ENCODE measurements at regions of chr15 and their contacts with region 1.

Region 1: GRCh38 chr15:85667491-85668424 is 127.0 kb downstream of the KLHL25 start:
- DNase-seq: peak in 32 of 35 experiments; percentile 22 to 93 (median 63)
- ATAC-seq: peak; percentile 81 to 94 (median 92)
- H3K4me3 ChIP-seq: no peak overlapping the region
- H3K4me3 Mint-ChIP-seq: peak overlapping the region; percentile 10 to 46 (median 29)
- H3K27ac ChIP-seq: peak overlapping the region; percentile 98
- H3K27ac Mint-ChIP-seq: peak overlapping the region; percentile 94 to 96
- H3K4me1 ChIP-seq: peaks cover 11 to 12% of the 10 kb centered on the region in 2 experiments
- H3K4me1 Mint-ChIP-seq: peaks cover 26 to 34% (median 26%) of the 10 kb centered on the region in 3 donors
- H3K27me3 ChIP-seq: no peaks in the 10 kb centered on the region
- H3K27me3 Mint-ChIP-seq: no peaks in the 10 kb centered on the region

Region 2: DNA sequence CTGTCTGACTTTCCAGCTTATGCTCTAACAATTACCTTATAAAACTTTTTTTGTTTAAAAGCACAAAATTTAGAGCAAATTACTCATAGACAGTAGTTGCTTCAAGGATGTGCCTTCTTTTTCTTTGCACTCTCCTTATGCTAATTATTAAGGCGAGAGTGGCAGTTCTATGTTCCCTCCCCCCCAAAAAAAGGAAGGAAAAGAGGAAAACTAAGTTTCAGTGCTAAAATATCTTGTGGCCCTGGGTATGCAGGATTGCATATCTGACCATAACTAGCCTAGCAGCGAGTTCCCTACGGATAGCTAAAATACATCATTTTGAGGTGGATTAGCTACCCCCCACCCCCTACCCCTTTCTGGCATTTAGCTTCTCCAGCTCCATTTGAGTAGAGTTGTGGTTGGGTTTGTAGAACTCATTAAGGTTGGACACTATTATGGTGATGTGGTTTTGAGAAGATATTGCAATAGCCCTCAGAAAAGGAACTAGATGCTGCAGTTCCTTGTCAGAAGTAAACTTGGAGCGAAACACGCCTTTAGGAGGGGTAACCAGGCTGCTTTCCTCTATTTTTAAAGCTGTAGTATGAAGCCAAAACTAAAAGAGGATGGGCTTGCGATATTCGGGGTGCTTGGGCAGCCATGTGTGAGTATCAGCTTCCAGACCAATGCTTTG is 112.8 kb before region 1 on chr15:
- CTCF ChIA-PET with region 1: no interaction called
- POLR2A ChIA-PET with region 1: no interaction called
- DNase-seq: no peak
- ATAC-seq: no peak
- H3K4me3 ChIP-seq: no peak overlapping the region
- H3K4me3 Mint-ChIP-seq: no peak overlapping the region
- H3K27ac ChIP-seq: no peak overlapping the region
- H3K27ac Mint-ChIP-seq: peak overlapping the region; percentile 24 to 33
- H3K4me1 ChIP-seq: peaks cover 6 to 7% of the 10 kb centered on the region in 2 experiments
- H3K4me1 Mint-ChIP-seq: peaks cover 44 to 55% (median 51%) of the 10 kb centered on the region in 3 donors
- H3K27me3 ChIP-seq: no peaks in the 10 kb centered on the region
- H3K27me3 Mint-ChIP-seq: no peaks in the 10 kb centered on the region

Region 3: DNA sequence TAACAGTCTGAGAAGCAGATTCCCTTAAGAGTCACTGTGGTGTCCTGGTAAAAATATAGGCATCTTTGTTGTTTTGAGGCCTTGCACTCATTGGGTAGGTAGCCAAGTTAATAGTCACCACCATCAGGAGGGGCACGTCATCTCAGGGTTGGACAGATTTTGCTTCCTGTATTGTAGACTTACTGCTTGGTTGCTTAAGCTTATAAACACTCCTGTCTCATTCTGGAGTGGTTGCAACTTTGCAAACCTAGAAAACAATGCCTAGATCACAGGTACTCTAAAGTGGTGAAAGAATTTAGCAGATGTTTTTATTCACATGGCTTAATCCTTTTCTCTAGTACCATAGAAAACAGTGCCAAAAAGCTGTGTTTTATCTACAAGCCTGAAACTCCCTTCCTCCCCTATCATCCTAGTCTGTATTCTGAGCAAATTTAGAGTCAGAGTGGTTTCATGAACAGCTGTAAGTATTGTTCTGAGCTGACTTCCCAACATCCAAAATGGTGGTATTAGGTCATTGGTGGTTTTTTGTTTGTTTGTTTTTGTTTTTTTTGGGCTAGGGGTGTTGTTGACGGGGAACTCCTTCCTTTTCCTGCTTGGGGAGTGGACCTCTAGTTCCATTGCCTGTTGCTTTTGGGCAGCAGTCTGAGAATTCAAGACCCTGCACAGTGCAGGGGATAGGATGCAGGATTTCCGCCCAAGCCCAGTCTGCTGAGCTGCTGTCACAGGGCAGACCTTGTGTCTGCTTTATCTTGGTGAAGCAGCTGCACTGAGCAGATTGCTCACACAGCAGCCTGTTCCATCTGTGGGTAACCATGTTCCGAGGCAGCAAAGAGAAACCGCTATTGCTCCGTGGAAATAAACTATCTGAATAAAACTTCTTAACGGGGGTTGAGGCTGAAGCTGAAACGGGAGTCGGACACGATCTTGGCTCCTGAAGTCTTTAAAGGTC is 85.4 kb before region 1 on chr15:
- CTCF ChIA-PET with region 1: interaction called in 1 of 2 experiments, 3 read pairs
- POLR2A ChIA-PET with region 1: interaction called in 1 of 2 experiments, 23 read pairs
- DNase-seq: peak; percentile 32 to 79 (median 64)
- ATAC-seq: peak; percentile 87 to 92 (median 90)
- H3K4me3 ChIP-seq: peak overlapping the region; percentile 55 to 58
- H3K4me3 Mint-ChIP-seq: peak overlapping the region; percentile 82 to 88 (median 82)
- H3K27ac ChIP-seq: peak overlapping the region; percentile 93
- H3K27ac Mint-ChIP-seq: peak overlapping the region; percentile 96 to 99
- H3K4me1 ChIP-seq: peaks cover 39 to 45% of the 10 kb centered on the region in 2 experiments
- H3K4me1 Mint-ChIP-seq: peaks cover 76 to 82% (median 77%) of the 10 kb centered on the region in 3 donors
- H3K27me3 ChIP-seq: no peaks in the 10 kb centered on the region
- H3K27me3 Mint-ChIP-seq: no peaks in the 10 kb centered on the region

Region 4: DNA sequence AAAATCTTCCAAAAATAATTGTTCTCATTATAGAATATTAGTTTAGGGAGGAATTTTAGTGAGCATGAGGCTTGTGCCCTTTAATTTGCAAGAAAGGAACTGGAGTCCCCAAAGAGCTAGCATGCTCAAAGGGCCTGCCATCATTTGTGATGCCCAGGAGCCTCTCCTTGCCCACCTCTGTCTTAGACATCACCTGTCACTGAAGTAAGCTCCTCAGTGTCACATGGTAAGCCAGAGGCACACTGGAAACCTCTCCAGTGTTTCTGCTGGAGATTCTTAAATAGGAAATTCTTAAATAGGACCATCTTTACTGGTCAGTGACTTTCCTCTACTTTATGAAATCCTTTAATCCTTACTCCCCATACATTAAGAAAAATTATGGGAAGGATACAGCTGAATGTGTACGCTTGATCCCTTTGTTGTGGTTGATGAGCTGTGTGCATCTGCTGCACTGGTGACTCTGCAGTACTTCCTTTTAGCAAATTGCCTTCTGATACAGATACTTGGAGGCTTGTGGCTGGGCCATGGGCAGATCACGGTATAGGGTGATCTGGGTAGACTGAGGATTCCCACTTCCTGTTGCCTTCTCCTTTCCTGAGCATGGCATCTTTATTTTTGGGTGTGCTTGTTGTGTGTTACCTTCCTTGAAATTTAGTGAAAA is 70.5 kb before region 1 on chr15:
- CTCF ChIA-PET with region 1: no interaction called
- POLR2A ChIA-PET with region 1: no interaction called
- DNase-seq: peak in 6 of 35 experiments; percentile 16 to 59 (median 20)
- ATAC-seq: peak; percentile 89 to 98 (median 92)
- H3K4me3 ChIP-seq: no peak overlapping the region
- H3K4me3 Mint-ChIP-seq: peak overlapping the region in 2 of 3 donors; percentile 21 to 50
- H3K27ac ChIP-seq: peak overlapping the region; percentile 26
- H3K27ac Mint-ChIP-seq: peak overlapping the region; percentile 81 to 92
- H3K4me1 ChIP-seq: peaks cover 10 to 13% of the 10 kb centered on the region in 2 experiments
- H3K4me1 Mint-ChIP-seq: peaks cover 47 to 56% (median 55%) of the 10 kb centered on the region in 3 donors
- H3K27me3 ChIP-seq: no peaks in the 10 kb centered on the region
- H3K27me3 Mint-ChIP-seq: no peaks in the 10 kb centered on the region

Region 5: GRCh38 chr15:85646538-85647091 is 21.1 kb before region 1 on chr15:
- CTCF ChIA-PET with region 1: interaction called in 1 of 2 experiments, 3 read pairs
- POLR2A ChIA-PET with region 1: interaction called, 5 to 13 read pairs
- DNase-seq: peak in 21 of 35 experiments; percentile 3 to 78 (median 24)
- ATAC-seq: peak; percentile 63 to 80 (median 70)
- H3K4me3 ChIP-seq: no peak overlapping the region
- H3K4me3 Mint-ChIP-seq: peak overlapping the region in 1 of 3 donors; percentile 12
- H3K27ac ChIP-seq: peak overlapping the region; percentile 90
- H3K27ac Mint-ChIP-seq: peak overlapping the region; percentile 86 to 89
- H3K4me1 ChIP-seq: peaks cover 11 to 36% of the 10 kb centered on the region in 2 experiments
- H3K4me1 Mint-ChIP-seq: peaks cover 38 to 55% (median 52%) of the 10 kb centered on the region in 3 donors
- H3K27me3 ChIP-seq: no peaks in the 10 kb centered on the region
- H3K27me3 Mint-ChIP-seq: no peaks in the 10 kb centered on the region

Region 6: DNA sequence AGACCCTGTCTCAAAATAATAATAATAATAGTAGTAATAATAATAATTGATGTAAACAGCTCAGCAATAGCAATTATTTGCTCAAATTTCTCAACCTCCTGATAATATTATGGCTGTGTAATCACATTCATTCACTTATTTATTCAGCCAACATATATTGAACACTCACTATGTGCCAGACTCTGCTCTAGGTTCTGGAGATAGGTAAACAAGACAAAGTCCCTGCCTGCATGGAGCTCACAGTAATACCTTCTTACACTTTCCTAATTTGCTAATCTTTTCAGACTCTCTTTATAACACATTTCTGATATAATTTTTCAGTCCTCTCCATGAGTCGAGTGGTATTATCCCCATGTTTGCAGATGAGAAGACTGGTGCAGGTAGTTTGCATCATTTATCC is 10.6 kb before region 1 on chr15:
- CTCF ChIA-PET with region 1: interaction called in 1 of 2 experiments, 5 read pairs
- POLR2A ChIA-PET with region 1: interaction called, 9 to 14 read pairs
- DNase-seq: no peak
- ATAC-seq: no peak
- H3K4me3 ChIP-seq: no peak overlapping the region
- H3K4me3 Mint-ChIP-seq: no peak overlapping the region
- H3K27ac ChIP-seq: no peak overlapping the region
- H3K27ac Mint-ChIP-seq: no peak overlapping the region
- H3K4me1 ChIP-seq: no peaks in the 10 kb centered on the region
- H3K4me1 Mint-ChIP-seq: peaks cover 0 to 8% (median 2%) of the 10 kb centered on the region in 3 donors
- H3K27me3 ChIP-seq: no peaks in the 10 kb centered on the region
- H3K27me3 Mint-ChIP-seq: no peaks in the 10 kb centered on the region

Region 7: GRCh38 chr15:85689729-85690128 is 22.0 kb after region 1 on chr15:
- CTCF ChIA-PET with region 1: interaction called in 1 of 2 experiments, 9 read pairs
- POLR2A ChIA-PET with region 1: interaction called, 3 to 35 read pairs
- DNase-seq: peak; percentile 53 to 83 (median 70)
- ATAC-seq: peak; percentile 79 to 90 (median 84)
- H3K4me3 ChIP-seq: peak overlapping the region; percentile 65 to 94
- H3K4me3 Mint-ChIP-seq: peak overlapping the region; percentile 96 to 98 (median 98)
- H3K27ac ChIP-seq: peak overlapping the region; percentile 93
- H3K27ac Mint-ChIP-seq: peak overlapping the region; percentile 98 to 99
- H3K4me1 ChIP-seq: peaks cover 33 to 51% of the 10 kb centered on the region in 2 experiments
- H3K4me1 Mint-ChIP-seq: peaks cover 70 to 77% (median 76%) of the 10 kb centered on the region in 3 donors
- H3K27me3 ChIP-seq: no peaks in the 10 kb centered on the region
- H3K27me3 Mint-ChIP-seq: no peaks in the 10 kb centered on the region

Region 8: DNA sequence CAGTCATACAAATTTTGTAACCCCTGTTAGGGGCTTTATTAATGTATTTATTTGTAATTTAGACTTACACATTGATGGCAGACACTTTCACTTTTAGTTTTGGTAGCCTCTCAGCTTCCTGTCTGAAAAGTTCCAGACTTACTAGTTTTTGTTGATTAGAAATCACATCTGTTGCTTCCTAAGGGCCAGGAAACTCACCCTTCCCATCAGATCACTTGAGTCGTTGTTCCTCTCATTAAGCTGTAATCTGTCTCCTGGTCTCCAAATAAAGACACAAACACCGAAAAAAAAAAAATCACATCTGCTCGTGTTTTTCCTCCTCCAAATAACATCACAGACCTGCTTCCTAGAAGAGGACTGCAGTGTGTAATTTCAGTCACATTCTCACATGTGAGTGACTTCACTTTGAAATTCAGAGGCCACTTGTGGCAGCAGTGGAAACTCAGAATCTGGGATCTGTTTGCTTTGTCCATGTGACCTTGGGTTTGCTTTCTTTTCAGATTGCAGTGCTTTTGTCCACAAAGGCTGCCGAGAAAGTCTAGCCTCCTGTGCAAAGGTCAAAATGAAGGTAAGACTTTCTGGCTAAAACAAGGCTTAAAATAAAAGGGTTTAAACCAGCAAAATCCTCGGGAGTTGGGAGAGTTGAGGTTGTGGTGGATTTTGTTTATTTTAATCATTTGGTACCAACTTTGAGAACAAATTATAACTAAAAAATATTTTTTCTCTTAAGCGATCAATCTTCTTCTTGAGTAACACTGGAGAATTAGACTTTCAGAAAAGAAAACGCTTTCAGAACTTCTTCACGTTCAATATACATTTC is 40.0 kb after region 1 on chr15:
- CTCF ChIA-PET with region 1: interaction called in 1 of 2 experiments, 6 read pairs
- POLR2A ChIA-PET with region 1: interaction called in 1 of 2 experiments, 11 read pairs
- DNase-seq: peak in 1 of 35 experiments; percentile 73
- ATAC-seq: peak; percentile 38 to 65 (median 42)
- H3K4me3 ChIP-seq: peak overlapping the region; percentile 34 to 46
- H3K4me3 Mint-ChIP-seq: peak overlapping the region; percentile 73 to 84 (median 82)
- H3K27ac ChIP-seq: peak overlapping the region; percentile 91
- H3K27ac Mint-ChIP-seq: peak overlapping the region; percentile 95 to 98
- H3K4me1 ChIP-seq: peaks cover 43 to 65% of the 10 kb centered on the region in 2 experiments
- H3K4me1 Mint-ChIP-seq: peaks cover 74 to 88% (median 87%) of the 10 kb centered on the region in 3 donors
- H3K27me3 ChIP-seq: no peaks in the 10 kb centered on the region
- H3K27me3 Mint-ChIP-seq: no peaks in the 10 kb centered on the region

Region 9: GRCh38 chr15:85750319-85750806 is 82.6 kb after region 1 on chr15:
- CTCF ChIA-PET with region 1: no interaction called
- POLR2A ChIA-PET with region 1: interaction called in 1 of 2 experiments, 13 read pairs
- DNase-seq: no peak
- ATAC-seq: peak in 2 of 4 experiments; percentile 7 to 25
- H3K4me3 ChIP-seq: no peak overlapping the region
- H3K4me3 Mint-ChIP-seq: no peak overlapping the region
- H3K27ac ChIP-seq: no peak overlapping the region
- H3K27ac Mint-ChIP-seq: peak overlapping the region; percentile 52 to 70
- H3K4me1 ChIP-seq: peaks cover 3 to 22% of the 10 kb centered on the region in 2 experiments
- H3K4me1 Mint-ChIP-seq: peaks cover 32 to 40% (median 36%) of the 10 kb centered on the region in 3 donors
- H3K27me3 ChIP-seq: no peaks in the 10 kb centered on the region
- H3K27me3 Mint-ChIP-seq: no peaks in the 10 kb centered on the region